Activated T-helper 1 cell treated with anti-CD3 and anti-CD28 coated beads, Interleukin-12 subunit alpha, Interleukin-12 subunit beta, Interleukin-2, Interleukin-4 antibody, amounts not matched to agents 30 ng/mL and 10 ng/mL and 1 ng/mL, durations not matched to agents 14 hours and 24 hours and 36 hours (primary cell): ENCODE measurements at regions of chr22 and their contacts with region 1.

Region 1: DNA sequence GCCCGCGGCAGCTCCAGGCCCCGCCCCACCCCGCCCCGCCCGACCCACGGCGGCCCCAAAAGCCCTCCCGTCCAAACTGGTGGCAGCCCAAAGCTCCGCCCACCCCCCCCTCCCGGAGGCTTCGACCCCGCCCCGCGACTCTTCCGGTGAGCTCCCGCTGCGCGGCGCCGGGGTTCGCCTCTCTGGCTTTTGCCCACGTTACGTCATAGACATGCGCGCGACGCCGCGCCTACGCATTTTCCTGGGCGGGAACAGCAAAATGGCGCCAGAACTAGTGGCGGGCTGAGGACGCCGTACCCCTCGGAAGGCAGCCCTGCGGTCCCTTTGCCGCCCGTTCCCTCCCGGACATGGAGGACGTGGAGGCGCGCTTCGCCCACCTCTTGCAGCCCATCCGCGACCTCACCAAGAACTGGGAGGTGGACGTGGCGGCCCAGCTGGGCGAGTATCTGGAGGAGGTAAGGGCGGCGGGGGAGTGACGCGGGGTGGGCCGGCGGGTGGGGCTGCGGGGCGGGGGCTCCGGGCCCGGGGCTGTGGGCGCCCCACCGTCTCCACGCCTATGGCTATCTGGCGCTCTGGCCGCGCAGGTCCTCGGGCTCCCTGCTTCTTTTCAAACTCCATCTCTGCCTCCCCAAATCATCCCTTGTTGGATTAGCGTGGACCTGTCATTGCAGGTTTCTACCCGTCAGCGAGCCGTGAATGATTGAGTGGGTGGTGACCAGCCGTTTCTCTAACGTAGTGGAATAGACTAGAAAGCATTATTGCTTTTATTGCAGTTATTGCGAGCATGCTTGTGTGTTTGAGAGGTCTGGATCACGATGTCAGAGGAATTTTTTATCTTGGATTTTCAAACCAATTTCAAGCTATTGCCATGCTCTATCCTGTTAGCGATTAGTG is at the start of gene NCAPH2:
- DNase-seq: peak; percentile 97
- H3K4me3 Mint-ChIP-seq: peak within 1 kb of the TSS; percentile 96
- H3K27ac Mint-ChIP-seq: peak within 1 kb of the TSS; percentile 95
- H3K4me1 Mint-ChIP-seq: peaks cover 24% of the 10 kb centered on the region
- H3K27me3 Mint-ChIP-seq: no peaks in the 10 kb centered on the region
- total RNA-seq, gene NCAPH2: 133 and 134 TPM in 2 replicates

Region 2: DNA sequence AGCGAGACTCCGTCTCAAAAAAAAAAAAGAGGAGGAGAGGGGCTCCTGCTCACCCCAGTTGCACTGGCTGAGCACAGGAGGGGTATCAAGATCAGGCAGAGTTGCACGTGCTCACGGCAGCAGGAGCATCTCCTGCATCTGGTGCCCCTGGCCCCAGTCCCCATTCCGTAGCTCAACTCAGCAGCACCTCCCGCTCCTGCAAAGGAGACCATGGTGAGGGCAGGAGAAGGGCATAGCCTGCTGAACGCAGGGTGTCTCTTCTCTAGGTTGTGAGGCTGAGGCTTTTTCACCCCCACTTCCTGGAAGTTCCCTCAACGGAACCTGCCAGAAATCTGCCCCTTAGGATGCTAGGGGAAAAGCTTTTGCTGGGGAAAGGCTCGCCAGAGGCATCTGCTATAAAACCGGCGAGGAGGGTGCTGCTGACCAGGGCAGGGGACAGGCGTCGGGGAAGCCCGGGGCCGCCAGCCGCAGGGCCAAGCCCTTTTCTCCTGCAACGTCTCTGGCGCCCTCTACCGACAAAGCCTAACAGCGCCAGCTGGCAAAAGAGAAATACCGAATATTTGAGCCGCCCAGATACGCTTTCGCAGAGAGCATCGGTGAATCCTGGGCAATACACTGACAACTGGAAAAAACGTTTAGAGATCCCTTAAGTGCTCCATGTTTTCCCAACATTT is 166.1 kb before region 1 on chr22:
- intact Hi-C with region 1: loop called (anchors 2 kb)
- DNase-seq: peak; percentile 80
- H3K4me3 Mint-ChIP-seq: peak overlapping the region; percentile 83
- H3K27ac Mint-ChIP-seq: peak overlapping the region; percentile 78
- H3K4me1 Mint-ChIP-seq: peaks cover 11% of the 10 kb centered on the region
- H3K27me3 Mint-ChIP-seq: peaks cover 2% of the 10 kb centered on the region

Region 3: GRCh38 chr22:50474668-50475492 is 33.4 kb before region 1 on chr22 and contains the start of gene SBF1:
- intact Hi-C with region 1: loop called (anchors 1 kb)
- DNase-seq: peak; percentile 87
- H3K4me3 Mint-ChIP-seq: peak within 1 kb of the TSS; percentile 87
- H3K27ac Mint-ChIP-seq: peak within 1 kb of the TSS; percentile 74
- H3K4me1 Mint-ChIP-seq: peaks cover 39% of the 10 kb centered on the region
- H3K27me3 Mint-ChIP-seq: peaks cover 12% of the 10 kb centered on the region
- total RNA-seq, gene SBF1: 113 and 116 TPM in 2 replicates

Region 4: DNA sequence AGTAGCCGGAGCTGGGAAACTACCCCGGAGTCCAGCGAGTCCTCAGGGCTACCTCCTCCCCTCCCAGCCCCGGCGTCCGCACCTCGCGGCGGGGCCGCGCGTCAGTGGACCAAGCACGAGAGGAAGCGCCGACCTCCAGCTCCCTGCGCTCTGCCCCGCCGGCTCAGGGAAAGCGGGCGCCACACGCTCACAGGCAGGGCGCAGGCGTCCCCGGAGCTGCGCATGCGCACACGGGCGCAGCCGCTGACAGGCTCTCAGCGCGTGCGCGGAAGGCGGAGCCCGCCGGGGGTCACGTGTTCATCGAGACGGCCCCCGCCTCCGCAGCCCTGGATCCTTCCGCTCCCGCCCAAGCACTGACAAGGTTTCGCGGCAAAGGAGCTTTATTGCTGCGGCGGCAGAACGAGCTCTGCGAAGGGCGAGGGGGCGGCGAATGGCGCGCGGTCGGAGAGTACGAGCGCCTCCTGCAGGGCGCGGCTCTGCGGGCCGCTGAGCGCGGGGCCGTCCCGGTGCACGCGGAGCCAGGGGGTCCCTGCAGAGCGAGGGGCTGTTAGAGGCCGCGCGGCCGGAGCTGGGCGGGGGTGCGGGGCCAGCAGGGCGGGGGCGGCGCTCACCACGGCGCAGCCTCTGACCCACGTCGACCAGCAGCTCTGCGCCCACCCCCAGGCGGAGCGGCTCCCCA is 17.3 kb after region 1 on chr22 and contains the start of gene SCO2:
- intact Hi-C with region 1: loop called (anchors 1 kb)
- DNase-seq: peak; percentile 97
- H3K4me3 Mint-ChIP-seq: peak within 1 kb of the TSS; percentile 94
- H3K27ac Mint-ChIP-seq: peak within 1 kb of the TSS; percentile 88
- H3K4me1 Mint-ChIP-seq: peaks cover 34% of the 10 kb centered on the region
- H3K27me3 Mint-ChIP-seq: no peaks in the 10 kb centered on the region
- total RNA-seq, gene SCO2: 8.7 and 14.8 TPM in 2 replicates

Region 5: GRCh38 chr22:50582562-50583293 is 74.5 kb after region 1 on chr22 and contains the start of gene CHKB:
- intact Hi-C with region 1: loop called (anchors 1 kb)
- DNase-seq: peak; percentile 100
- H3K4me3 Mint-ChIP-seq: peak within 1 kb of the TSS; percentile 94
- H3K27ac Mint-ChIP-seq: peak within 1 kb of the TSS; percentile 96
- H3K4me1 Mint-ChIP-seq: peaks cover 22% of the 10 kb centered on the region
- H3K27me3 Mint-ChIP-seq: no peaks in the 10 kb centered on the region
- total RNA-seq, gene CHKB: 81.0 and 88.7 TPM in 2 replicates